Mammary epithelial cell (primary cell): ENCODE measurements at regions of chr10 and their contacts with region 1.

Region 1: GRCh38 chr10:62437696-62438095 is 63.5 kb downstream of the ZNF365 start:
- DNase-seq: peak; percentile 79
- H3K4me3 ChIP-seq: no peak overlapping the region
- H3K27ac ChIP-seq: no peak overlapping the region
- H3K4me1 ChIP-seq: peaks cover 21% of the 10 kb centered on the region
- H3K27me3 ChIP-seq: no peaks in the 10 kb centered on the region
- CTCF ChIP-seq: peak; percentile 70 to 71

Region 2: GRCh38 chr10:62308101-62308500 is 129.6 kb before region 1 on chr10:
- CTCF ChIA-PET with region 1: interaction called, 18 read pairs
- dilution Hi-C with region 1: no loop called
- in situ Hi-C with region 1: no loop called
- intact Hi-C with region 1: no loop called
- DNase-seq: no peak
- H3K4me3 ChIP-seq: no peak overlapping the region
- H3K27ac ChIP-seq: no peak overlapping the region
- H3K4me1 ChIP-seq: no peaks in the 10 kb centered on the region
- H3K27me3 ChIP-seq: no peaks in the 10 kb centered on the region
- CTCF ChIP-seq: no peak

Region 3: GRCh38 chr10:62373995-62374861 is 63.5 kb before region 1 on chr10 and contains the start of gene ZNF365:
- CTCF ChIA-PET with region 1: no interaction called
- dilution Hi-C with region 1: no loop called
- in situ Hi-C with region 1: no loop called
- intact Hi-C with region 1: loop called (anchors 2 kb)
- DNase-seq: peak; percentile 78
- H3K4me3 ChIP-seq: peak within 1 kb of the TSS; percentile 26 to 72 (median 66)
- H3K27ac ChIP-seq: peak within 1 kb of the TSS; percentile 61
- H3K4me1 ChIP-seq: peaks cover 30% of the 10 kb centered on the region
- H3K27me3 ChIP-seq: no peaks in the 10 kb centered on the region
- CTCF ChIP-seq: no peak
- total RNA-seq, gene ZNF365: 10.1 to 13.0 TPM

Region 4: DNA sequence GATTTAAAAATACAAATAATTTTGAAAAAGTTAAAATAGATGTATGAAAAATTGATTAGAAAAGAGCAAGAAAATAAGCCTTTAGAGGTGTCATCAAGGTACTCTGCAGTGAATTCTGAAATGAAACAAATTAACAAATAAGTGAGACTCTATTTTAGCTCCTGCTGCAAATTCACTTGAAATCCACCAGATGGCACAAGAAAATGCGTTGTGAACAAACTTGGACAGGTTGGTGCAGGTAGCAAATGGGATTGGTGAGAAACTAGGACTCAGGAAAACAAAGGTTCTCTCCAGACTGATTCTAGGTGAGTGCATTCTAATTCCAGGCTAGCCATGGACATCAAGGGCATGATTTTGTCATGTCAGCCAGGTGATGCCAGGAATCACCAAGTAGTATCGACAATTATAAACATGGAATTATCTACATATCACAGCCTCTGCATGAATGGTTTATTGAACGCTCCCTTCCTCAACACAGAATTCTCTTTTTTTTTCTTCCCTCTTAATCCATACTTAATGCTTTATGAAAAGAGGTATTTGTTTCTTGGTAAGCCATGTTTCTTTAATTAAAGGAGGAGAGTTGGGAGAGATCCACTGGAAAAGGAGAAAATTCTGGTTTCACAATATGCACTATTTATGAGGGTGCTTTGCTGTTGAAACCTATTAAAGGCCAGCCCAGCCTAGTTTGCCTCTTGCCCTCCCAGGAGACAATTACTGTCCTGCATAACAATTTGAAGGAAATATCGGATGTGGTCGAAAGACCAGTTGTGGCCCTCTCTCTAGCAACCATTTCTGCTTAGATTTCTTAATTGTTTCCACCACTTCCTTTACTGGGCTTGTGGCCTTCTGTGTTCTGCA is 54.5 kb after region 1 on chr10:
- CTCF ChIA-PET with region 1: no interaction called
- dilution Hi-C with region 1: no loop called
- in situ Hi-C with region 1: no loop called
- intact Hi-C with region 1: loop called (anchors 5 kb)
- DNase-seq: peak; percentile 72
- H3K4me3 ChIP-seq: no peak overlapping the region
- H3K27ac ChIP-seq: peak overlapping the region; percentile 55
- H3K4me1 ChIP-seq: peaks cover 10% of the 10 kb centered on the region
- H3K27me3 ChIP-seq: no peaks in the 10 kb centered on the region
- CTCF ChIP-seq: peak; percentile 80 to 87

Region 5: GRCh38 chr10:62541811-62542210 is 104.1 kb after region 1 on chr10:
- CTCF ChIA-PET with region 1: no interaction called
- dilution Hi-C with region 1: no loop called
- in situ Hi-C with region 1: no loop called
- intact Hi-C with region 1: no loop called
- DNase-seq: no peak
- H3K4me3 ChIP-seq: no peak overlapping the region
- H3K27ac ChIP-seq: no peak overlapping the region
- H3K4me1 ChIP-seq: no peaks in the 10 kb centered on the region
- H3K27me3 ChIP-seq: no peaks in the 10 kb centered on the region
- CTCF ChIP-seq: no peak

Region 6: DNA sequence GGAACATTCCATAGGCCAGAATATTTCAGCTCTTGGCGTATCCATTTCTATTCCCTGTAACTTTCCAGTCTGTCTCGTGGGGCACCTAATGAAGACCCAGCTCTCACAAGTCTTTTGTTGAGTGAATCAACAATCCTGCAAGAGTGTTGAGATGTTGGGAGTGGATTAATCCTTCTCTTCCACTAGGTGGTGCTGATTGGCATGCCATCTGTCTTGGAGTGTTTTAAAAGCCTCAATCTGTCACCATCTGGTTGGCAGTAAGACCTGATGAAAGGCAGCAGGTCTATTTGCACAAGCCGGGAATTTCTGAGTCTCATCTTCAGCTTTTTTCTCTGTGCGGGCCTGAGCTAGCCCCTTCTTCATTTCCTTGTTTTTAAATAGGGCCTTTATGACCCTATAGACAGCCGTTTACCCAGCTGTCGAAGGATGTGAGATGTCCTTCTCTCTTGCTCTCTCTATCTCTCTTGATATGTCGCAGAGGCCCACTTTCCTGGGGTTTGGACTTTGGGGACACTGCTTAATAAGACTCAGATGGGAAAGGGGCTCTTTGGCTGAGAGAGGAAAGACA is 117.0 kb after region 1 on chr10:
- CTCF ChIA-PET with region 1: no interaction called
- dilution Hi-C with region 1: no loop called
- in situ Hi-C with region 1: no loop called
- intact Hi-C with region 1: loop called (anchors 1 kb)
- DNase-seq: peak; percentile 54
- H3K4me3 ChIP-seq: no peak overlapping the region
- H3K27ac ChIP-seq: no peak overlapping the region
- H3K4me1 ChIP-seq: peaks cover under 1% of the 10 kb centered on the region
- H3K27me3 ChIP-seq: no peaks in the 10 kb centered on the region
- CTCF ChIP-seq: peak; percentile 57 to 77

Region 7: DNA sequence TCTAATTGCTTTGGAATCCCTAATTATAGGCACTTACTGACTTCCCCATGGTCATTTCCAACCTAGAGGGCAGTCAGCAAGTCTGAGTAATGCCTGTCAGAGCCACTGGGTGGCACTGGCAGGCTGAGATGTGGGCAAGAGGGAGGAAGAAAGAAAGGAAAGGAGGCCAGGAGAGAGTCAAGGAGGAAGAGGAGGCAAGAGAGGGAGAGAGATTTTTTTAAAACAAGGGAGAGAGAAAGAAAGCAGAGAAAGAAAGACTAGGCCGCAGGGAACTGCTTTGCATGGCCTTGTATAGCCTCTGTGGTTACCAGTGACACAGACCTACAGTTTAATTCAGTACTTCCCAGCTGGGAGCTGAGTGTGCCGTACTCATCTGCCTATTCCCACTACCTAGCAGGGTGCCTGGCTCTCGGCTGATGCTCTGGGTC is 156.4 kb after region 1 on chr10:
- CTCF ChIA-PET with region 1: no interaction called
- dilution Hi-C with region 1: no loop called
- in situ Hi-C with region 1: no loop called
- intact Hi-C with region 1: loop called (anchors 5 kb)
- DNase-seq: peak; percentile 51
- H3K4me3 ChIP-seq: no peak overlapping the region
- H3K27ac ChIP-seq: no peak overlapping the region
- H3K4me1 ChIP-seq: peaks cover 4% of the 10 kb centered on the region
- H3K27me3 ChIP-seq: no peaks in the 10 kb centered on the region
- CTCF ChIP-seq: peak; percentile 92 to 96